Activated T-helper 1 cell treated with anti-CD3 and anti-CD28 coated beads, Interleukin-12 subunit alpha, Interleukin-12 subunit beta, Interleukin-2, Interleukin-4 antibody, amounts not matched to agents 30 ng/mL and 10 ng/mL and 1 ng/mL, durations not matched to agents 14 hours and 24 hours and 36 hours (primary cell): ENCODE measurements at regions of chr3 and their contacts with region 1.

Region 1: DNA sequence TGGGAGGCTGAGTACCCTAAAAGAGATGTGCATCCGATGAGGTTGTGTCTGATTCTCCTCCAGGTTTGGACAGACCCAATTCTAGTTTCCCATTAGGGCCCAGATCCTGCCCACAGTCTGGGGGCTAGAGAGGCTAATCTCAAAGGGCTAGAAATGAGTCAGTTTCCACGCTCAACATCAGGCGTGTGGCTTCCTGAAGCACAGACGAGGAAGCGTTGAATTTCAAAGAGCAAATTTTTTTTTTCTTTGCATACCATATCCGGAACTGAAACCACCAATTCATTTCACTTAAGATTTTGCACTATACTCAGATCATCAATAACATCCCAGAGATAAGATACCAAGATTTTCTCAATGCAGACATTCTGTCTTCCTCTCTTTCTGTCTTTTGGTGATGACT is 173.8 kb upstream of the BCL6 start:
- DNase-seq: peak; percentile 67
- H3K4me3 Mint-ChIP-seq: peak overlapping the region; percentile 62
- H3K27ac Mint-ChIP-seq: peak overlapping the region; percentile 93
- H3K4me1 Mint-ChIP-seq: peaks cover 86% of the 10 kb centered on the region
- H3K27me3 Mint-ChIP-seq: peaks cover 3% of the 10 kb centered on the region

Region 2: GRCh38 chr3:187777331-187777941 is 141.6 kb before region 1 on chr3:
- intact Hi-C with region 1: loop called (anchors 1 kb)
- DNase-seq: peak; percentile 40
- H3K4me3 Mint-ChIP-seq: peak overlapping the region; percentile 32
- H3K27ac Mint-ChIP-seq: peak overlapping the region; percentile 91
- H3K4me1 Mint-ChIP-seq: peaks cover 64% of the 10 kb centered on the region
- H3K27me3 Mint-ChIP-seq: no peaks in the 10 kb centered on the region

Region 3: DNA sequence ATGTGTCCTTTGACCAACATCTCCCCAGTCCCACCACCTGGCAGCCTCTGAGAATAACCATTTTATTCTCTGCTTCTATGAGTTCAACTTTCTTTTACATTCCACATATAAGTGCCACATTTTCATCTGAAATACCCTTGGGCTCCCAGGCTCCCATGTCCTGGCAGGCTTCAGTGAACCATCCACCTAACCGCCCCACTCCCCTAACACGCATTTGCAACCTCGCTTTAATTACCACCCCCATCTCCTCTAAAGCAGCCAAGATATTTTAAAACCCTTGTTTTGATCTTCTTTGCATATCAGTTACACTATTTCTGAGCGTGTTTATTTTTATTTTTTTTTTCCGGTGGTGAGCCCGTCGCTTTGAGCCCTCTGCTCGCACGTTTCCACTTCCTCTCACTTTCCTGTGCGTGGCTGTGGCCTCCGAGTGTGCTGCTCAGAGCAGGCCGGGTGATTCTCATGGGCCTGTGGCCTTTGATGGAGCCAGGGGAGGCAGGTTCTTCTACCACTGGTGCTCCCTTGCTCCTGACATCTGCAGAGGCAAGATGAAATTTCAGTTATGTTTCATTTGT is 39.5 kb after region 1 on chr3:
- intact Hi-C with region 1: loop called (anchors 1 kb)
- DNase-seq: peak; percentile 35
- H3K4me3 Mint-ChIP-seq: peak overlapping the region; percentile 61
- H3K27ac Mint-ChIP-seq: peak overlapping the region; percentile 57
- H3K4me1 Mint-ChIP-seq: peaks cover 50% of the 10 kb centered on the region
- H3K27me3 Mint-ChIP-seq: no peaks in the 10 kb centered on the region

Region 4: GRCh38 chr3:188257384-188258026 is 338.5 kb after region 1 on chr3:
- intact Hi-C with region 1: loop called (anchors 1 kb)
- DNase-seq: no peak
- H3K4me3 Mint-ChIP-seq: no peak overlapping the region
- H3K27ac Mint-ChIP-seq: peak overlapping the region; percentile 63
- H3K4me1 Mint-ChIP-seq: peaks cover 62% of the 10 kb centered on the region
- H3K27me3 Mint-ChIP-seq: peaks cover 2% of the 10 kb centered on the region

Region 5: GRCh38 chr3:188389711-188390342 is 470.8 kb after region 1 on chr3:
- intact Hi-C with region 1: loop called (anchors 1 kb)
- DNase-seq: peak; percentile 33
- H3K4me3 Mint-ChIP-seq: peak overlapping the region; percentile 25
- H3K27ac Mint-ChIP-seq: peak overlapping the region; percentile 86
- H3K4me1 Mint-ChIP-seq: peaks cover 44% of the 10 kb centered on the region
- H3K27me3 Mint-ChIP-seq: peaks cover 1% of the 10 kb centered on the region

Region 6: DNA sequence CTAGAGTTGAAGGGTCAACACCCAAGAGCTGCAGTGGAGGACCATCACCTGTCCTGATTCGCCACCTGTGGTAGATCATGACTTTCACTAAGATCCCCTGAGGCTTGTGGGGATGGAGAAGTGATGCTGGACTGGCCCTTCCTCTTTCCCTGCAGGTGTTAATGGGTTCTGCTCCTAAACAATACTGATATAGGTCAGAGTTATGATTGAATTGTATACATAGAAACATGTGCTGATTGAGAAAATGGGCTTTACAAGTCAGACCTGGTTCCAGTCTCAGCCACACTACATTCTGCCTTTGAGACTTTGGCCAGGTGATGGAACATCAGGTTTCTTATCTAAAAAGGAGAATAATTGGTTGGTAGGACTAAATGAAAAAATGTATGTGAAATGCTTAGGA is 833.8 kb after region 1 on chr3:
- intact Hi-C with region 1: loop called (anchors 1 kb)
- DNase-seq: no peak
- H3K4me3 Mint-ChIP-seq: no peak overlapping the region
- H3K27ac Mint-ChIP-seq: peak overlapping the region; percentile 60
- H3K4me1 Mint-ChIP-seq: peaks cover 33% of the 10 kb centered on the region
- H3K27me3 Mint-ChIP-seq: peaks cover 2% of the 10 kb centered on the region

Region 7: GRCh38 chr3:189324538-189325138 is 1405.6 kb after region 1 on chr3:
- intact Hi-C with region 1: loop called (anchors 5 kb)
- DNase-seq: peak; percentile 85
- H3K4me3 Mint-ChIP-seq: peak overlapping the region; percentile 83
- H3K27ac Mint-ChIP-seq: peak overlapping the region; percentile 99
- H3K4me1 Mint-ChIP-seq: peaks cover 72% of the 10 kb centered on the region
- H3K27me3 Mint-ChIP-seq: peaks cover 3% of the 10 kb centered on the region